ENCODE measurements at regions of chr15 and their contacts with region 1.

Region 1: DNA sequence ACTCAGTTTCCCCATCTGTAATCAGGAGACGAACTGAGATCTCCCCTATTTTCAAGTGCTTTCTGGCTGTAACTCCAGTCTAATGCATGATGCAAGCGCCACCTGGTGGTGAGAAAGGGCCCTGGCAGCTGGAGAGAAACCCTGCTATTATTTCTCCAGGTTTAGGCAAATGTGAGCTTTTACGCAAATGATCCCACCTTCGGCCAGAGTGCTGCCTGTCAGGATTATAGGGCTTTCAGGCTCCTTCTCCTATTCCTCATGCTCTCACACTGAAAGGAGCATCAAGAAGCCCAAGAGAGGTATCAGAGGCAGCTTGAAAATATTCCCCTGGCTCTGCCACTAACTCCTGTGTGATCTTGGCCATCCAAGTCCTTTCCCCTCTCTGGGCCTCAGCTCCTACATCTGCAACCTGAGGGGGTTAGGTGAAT is 93.9 kb upstream of the RASGRF1 start:
- DNase-seq: peak; percentile 19 to 63 (median 48)
- ATAC-seq: peak; percentile 46
- H3K4me3 ChIP-seq: no peak overlapping the region
- H3K4me3 Mint-ChIP-seq: no peak overlapping the region
- H3K27ac ChIP-seq: no peak overlapping the region
- H3K27ac Mint-ChIP-seq: no peak overlapping the region
- H3K4me1 ChIP-seq: no peaks in the 10 kb centered on the region
- H3K4me1 Mint-ChIP-seq: peaks cover 0 to 4% (median 0%) of the 10 kb centered on the region in 7 donors
- H3K27me3 ChIP-seq: no peaks in the 10 kb centered on the region
- H3K27me3 Mint-ChIP-seq: peaks cover 0 to 14% (median 8%) of the 10 kb centered on the region in 5 donors

Region 2: DNA sequence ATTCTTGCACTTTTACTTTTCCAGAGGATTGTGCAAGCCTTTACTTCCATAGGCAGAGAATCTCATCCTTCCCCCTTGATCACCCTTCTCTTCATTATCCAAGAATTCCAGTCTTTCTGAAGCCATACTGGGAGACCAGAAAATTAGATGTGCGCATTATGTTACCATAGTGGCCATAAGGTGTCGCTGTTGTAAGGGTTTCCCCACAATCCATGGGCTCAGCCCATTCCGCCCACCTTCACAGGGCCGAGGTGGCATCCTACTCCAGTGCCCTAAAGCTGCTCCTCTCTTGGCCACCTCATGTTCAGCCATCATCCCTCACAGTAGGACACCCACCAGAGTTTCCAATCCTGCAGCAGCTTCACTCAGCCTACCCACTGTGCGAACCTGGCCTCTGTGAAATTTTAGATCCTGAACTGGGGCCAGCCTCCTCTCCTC is 274.7 kb before region 1 on chr15:
- CTCF ChIA-PET with region 1: interaction called, 3 read pairs
- POLR2A ChIA-PET with region 1: no interaction called
- intact Hi-C with region 1: loop called (anchors 1 kb)
- DNase-seq: peak in 2 of 9 donors; percentile 19 to 23
- ATAC-seq: peak; percentile 65
- H3K4me3 ChIP-seq: no peak overlapping the region
- H3K4me3 Mint-ChIP-seq: no peak overlapping the region
- H3K27ac ChIP-seq: no peak overlapping the region
- H3K27ac Mint-ChIP-seq: peak overlapping the region in 6 of 9 donors; percentile 1 to 68 (median 39)
- H3K4me1 ChIP-seq: no peaks in the 10 kb centered on the region
- H3K4me1 Mint-ChIP-seq: peaks cover 5 to 41% (median 26%) of the 10 kb centered on the region in 7 donors
- H3K27me3 ChIP-seq: no peaks in the 10 kb centered on the region
- H3K27me3 Mint-ChIP-seq: no peaks in the 10 kb centered on the region

Region 3: DNA sequence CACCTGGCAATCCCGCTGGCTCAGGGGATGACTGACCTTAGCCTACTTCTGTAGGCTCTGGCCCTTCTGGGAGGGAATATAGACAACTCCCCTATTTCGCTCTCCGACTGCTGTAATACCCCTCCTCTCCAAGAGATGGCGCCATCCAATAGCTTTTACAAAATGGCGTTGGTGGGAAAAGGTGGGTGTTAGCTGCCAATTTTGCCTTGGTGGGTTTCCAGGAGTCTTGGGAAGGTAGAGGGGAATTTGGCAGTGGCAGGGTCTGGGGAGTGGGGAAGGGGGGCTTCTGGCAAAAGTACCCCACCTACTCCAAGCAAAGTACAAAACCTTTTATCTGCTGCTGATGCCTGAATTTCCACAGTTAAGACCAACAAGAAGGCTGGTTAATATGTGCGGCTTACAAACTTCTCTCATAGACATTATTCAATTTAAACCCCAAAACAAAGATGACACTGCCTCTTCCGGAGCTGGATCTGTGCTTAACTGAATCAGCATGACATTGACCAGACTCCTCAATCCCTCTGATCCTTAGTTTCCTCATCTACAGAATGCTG is 156.0 kb before region 1 on chr15:
- CTCF ChIA-PET with region 1: no interaction called
- POLR2A ChIA-PET with region 1: no interaction called
- intact Hi-C with region 1: loop called (anchors 1 kb)
- DNase-seq: peak in 1 of 9 donors; percentile 41
- ATAC-seq: no peak
- H3K4me3 ChIP-seq: no peak overlapping the region
- H3K4me3 Mint-ChIP-seq: no peak overlapping the region
- H3K27ac ChIP-seq: no peak overlapping the region
- H3K27ac Mint-ChIP-seq: no peak overlapping the region
- H3K4me1 ChIP-seq: no peaks in the 10 kb centered on the region
- H3K4me1 Mint-ChIP-seq: peaks cover 0 to 1% (median 0%) of the 10 kb centered on the region in 7 donors
- H3K27me3 ChIP-seq: no peaks in the 10 kb centered on the region
- H3K27me3 Mint-ChIP-seq: peaks cover 0 to 26% (median 4%) of the 10 kb centered on the region in 5 donors